T-cell (primary cell): ENCODE measurements at regions of chr17 and their contacts with region 1.

Region 1: GRCh38 chr17:49361902-49362722 is at the start of gene ZNF652:
- DNase-seq: peak; percentile 90 to 97 (median 95)
- ATAC-seq: peak; percentile 67 to 76 (median 71)
- H3K4me3 ChIP-seq: peak within 1 kb of the TSS; percentile 82 to 97
- H3K4me3 Mint-ChIP-seq: peak within 1 kb of the TSS; percentile 83 to 95 (median 91)
- H3K27ac ChIP-seq: peak within 1 kb of the TSS; percentile 75
- H3K27ac Mint-ChIP-seq: peak within 1 kb of the TSS; percentile 95
- H3K4me1 ChIP-seq: peaks cover 43 to 45% of the 10 kb centered on the region in 2 experiments
- H3K4me1 Mint-ChIP-seq: peaks cover 53 to 64% (median 56%) of the 10 kb centered on the region in 3 donors
- H3K27me3 ChIP-seq: no peaks in the 10 kb centered on the region
- H3K27me3 Mint-ChIP-seq: no peaks in the 10 kb centered on the region
- total RNA-seq, gene ZNF652: 51.0 to 61.0 (median 57.1) TPM

Region 2: DNA sequence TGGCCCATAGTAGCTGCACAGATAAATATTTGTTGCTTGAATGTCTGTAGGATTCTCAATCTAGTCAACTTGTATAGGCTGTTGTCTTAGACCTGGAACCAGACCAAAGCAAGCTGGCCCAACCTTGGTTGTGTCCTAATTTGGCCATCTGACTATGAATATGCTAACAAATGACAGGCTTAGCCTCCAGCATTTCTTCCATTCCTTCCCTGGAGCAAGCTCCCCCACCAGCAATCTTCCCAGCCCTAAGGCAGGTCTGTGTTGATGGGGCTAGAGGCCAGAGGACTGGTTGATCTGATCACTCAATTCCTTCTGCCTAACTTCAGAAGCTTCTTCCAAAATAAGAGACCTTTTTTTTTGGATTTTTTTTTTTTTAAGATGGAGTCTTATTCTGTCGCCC is 122.1 kb before region 1 on chr17:
- CTCF ChIA-PET with region 1: no interaction called
- POLR2A ChIA-PET with region 1: no interaction called
- DNase-seq: no peak
- ATAC-seq: no peak
- H3K4me3 ChIP-seq: no peak overlapping the region
- H3K4me3 Mint-ChIP-seq: no peak overlapping the region
- H3K27ac ChIP-seq: no peak overlapping the region
- H3K27ac Mint-ChIP-seq: no peak overlapping the region
- H3K4me1 ChIP-seq: no peaks in the 10 kb centered on the region
- H3K4me1 Mint-ChIP-seq: no peaks in the 10 kb centered on the region
- H3K27me3 ChIP-seq: peaks cover 0 to 10% of the 10 kb centered on the region in 2 experiments
- H3K27me3 Mint-ChIP-seq: peaks cover 2 to 6% of the 10 kb centered on the region in 2 donors

Region 3: DNA sequence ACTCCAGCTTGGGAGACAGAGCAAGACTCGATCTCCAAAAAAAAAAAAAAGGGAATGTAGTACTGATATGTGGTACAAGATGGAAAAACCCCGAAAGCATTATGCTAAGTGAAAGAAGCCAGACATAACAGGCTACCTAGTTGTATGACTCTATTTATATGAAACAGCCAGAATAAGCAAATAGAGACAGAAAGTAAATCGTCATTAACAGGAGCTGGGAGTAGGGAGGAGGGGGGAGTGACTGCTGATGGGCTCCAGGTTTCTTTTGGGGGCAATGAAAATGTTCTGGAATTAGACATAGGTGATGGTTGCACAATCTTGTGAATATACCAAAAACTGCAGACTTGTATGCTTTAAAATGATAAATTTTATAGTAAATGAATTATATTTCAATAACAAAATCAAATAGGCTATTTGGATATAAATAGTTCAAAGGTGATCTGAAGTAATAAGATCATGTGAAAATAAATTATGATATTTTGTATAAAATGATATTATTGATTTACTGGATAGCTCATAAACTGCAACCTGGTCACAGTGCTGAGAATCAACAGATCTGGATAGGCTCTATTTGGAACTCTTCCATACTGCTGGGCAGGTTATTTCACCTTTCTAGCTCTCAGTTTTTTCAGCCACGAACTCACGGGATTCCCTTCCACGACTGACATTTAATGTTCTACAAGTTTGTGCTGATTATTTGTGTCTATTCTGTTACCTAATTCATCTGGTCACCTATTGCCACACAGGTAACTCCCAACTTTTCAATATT is 27.2 kb before region 1 on chr17:
- CTCF ChIA-PET with region 1: interaction called, 6 to 10 read pairs
- POLR2A ChIA-PET with region 1: no interaction called
- DNase-seq: no peak
- ATAC-seq: no peak
- H3K4me3 ChIP-seq: no peak overlapping the region
- H3K4me3 Mint-ChIP-seq: no peak overlapping the region
- H3K27ac ChIP-seq: no peak overlapping the region
- H3K27ac Mint-ChIP-seq: no peak overlapping the region
- H3K4me1 ChIP-seq: peaks cover 2 to 26% of the 10 kb centered on the region in 2 experiments
- H3K4me1 Mint-ChIP-seq: peaks cover 36 to 47% (median 40%) of the 10 kb centered on the region in 3 donors
- H3K27me3 ChIP-seq: no peaks in the 10 kb centered on the region
- H3K27me3 Mint-ChIP-seq: no peaks in the 10 kb centered on the region

Region 4: GRCh38 chr17:49381063-49381462 is 19.0 kb after region 1 on chr17:
- CTCF ChIA-PET with region 1: no interaction called
- POLR2A ChIA-PET with region 1: no interaction called
- DNase-seq: no peak
- ATAC-seq: no peak
- H3K4me3 ChIP-seq: no peak overlapping the region
- H3K4me3 Mint-ChIP-seq: no peak overlapping the region
- H3K27ac ChIP-seq: no peak overlapping the region
- H3K27ac Mint-ChIP-seq: peak overlapping the region in 1 of 2 donors; percentile 16
- H3K4me1 ChIP-seq: no peaks in the 10 kb centered on the region
- H3K4me1 Mint-ChIP-seq: peaks cover 0 to 4% (median 2%) of the 10 kb centered on the region in 3 donors
- H3K27me3 ChIP-seq: no peaks in the 10 kb centered on the region
- H3K27me3 Mint-ChIP-seq: no peaks in the 10 kb centered on the region

Region 5: DNA sequence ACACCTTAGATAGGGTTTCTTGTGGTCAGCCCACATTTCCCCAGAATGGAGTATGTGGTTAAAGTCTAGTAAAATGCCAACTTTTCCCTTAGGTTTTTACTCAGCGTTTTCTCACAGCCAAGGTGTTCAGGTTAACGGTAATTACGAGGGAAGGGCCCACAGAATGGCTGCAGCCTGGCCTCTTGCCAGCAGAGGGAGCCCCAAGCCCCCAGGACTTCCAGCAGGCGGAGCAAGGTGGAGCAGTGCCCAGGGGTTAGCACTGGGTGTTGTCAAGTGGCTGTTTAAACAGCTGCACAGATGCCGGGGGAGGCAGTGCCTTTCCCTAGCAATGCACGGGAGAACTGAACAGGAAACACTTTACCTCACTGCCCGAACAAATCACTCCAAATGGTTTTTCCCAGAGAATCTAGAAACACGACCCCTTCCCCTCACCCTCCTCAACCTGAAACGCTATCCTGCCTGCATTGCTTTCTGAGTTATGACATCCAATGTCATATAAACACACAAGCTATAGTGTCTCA is 45.9 kb after region 1 on chr17:
- CTCF ChIA-PET with region 1: no interaction called
- POLR2A ChIA-PET with region 1: no interaction called
- DNase-seq: peak; percentile 62 to 89 (median 79)
- ATAC-seq: peak; percentile 94 to 99 (median 96)
- H3K4me3 ChIP-seq: no peak overlapping the region
- H3K4me3 Mint-ChIP-seq: no peak overlapping the region
- H3K27ac ChIP-seq: no peak overlapping the region
- H3K27ac Mint-ChIP-seq: peak overlapping the region in 1 of 2 donors; percentile 61
- H3K4me1 ChIP-seq: peaks cover 3 to 35% of the 10 kb centered on the region in 2 experiments
- H3K4me1 Mint-ChIP-seq: peaks cover 32 to 38% (median 36%) of the 10 kb centered on the region in 3 donors
- H3K27me3 ChIP-seq: no peaks in the 10 kb centered on the region
- H3K27me3 Mint-ChIP-seq: no peaks in the 10 kb centered on the region